ENCODE measurements at regions of chr2 and their contacts with region 1.

Region 1: GRCh38 chr2:29130295-29130694 is 15.1 kb downstream of the CLIP4 start:
- DNase-seq: no peak
- H3K4me3 ChIP-seq: peak overlapping the region; percentile 43
- H3K27ac ChIP-seq: peak overlapping the region; percentile 97
- H3K27me3 ChIP-seq: no peaks in the 10 kb centered on the region
- CTCF ChIP-seq: no peak

Region 2: DNA sequence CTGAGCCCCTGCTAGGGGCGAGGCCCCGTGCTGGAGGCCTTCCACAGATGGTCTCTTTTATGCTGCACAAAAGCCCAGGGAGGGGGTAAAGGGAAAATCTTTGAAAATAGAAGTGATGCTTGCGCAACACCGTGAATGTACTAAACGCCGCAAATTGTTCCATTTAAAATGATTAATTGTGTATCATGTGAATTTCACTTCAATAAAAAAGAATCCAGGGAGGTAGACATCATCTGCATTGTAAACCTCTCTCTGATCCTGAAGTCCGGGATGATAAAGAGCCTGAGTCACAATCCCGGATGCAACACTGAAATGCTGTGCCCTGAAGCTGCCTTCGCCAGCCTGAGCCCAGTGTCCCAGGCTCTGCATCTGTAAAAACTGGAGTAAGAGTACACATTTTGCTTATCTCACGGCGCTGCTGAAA is 486.4 kb before region 1 on chr2:
- CTCF ChIA-PET with region 1: no interaction called
- POLR2A ChIA-PET with region 1: no interaction called
- DNase-seq: no peak
- H3K4me3 ChIP-seq: no peak overlapping the region
- H3K27ac ChIP-seq: peak overlapping the region; percentile 52
- H3K27me3 ChIP-seq: no peaks in the 10 kb centered on the region
- CTCF ChIP-seq: no peak

Region 3: GRCh38 chr2:29108225-29108624 is 22.1 kb before region 1 on chr2:
- CTCF ChIA-PET with region 1: no interaction called
- POLR2A ChIA-PET with region 1: interaction called, 11 read pairs
- DNase-seq: peak; percentile 88
- H3K4me3 ChIP-seq: no peak overlapping the region; the same call in 1 of the 2 replicates
- H3K27ac ChIP-seq: peak overlapping the region; percentile 69
- H3K27me3 ChIP-seq: no peaks in the 10 kb centered on the region
- CTCF ChIP-seq: no peak

Region 4: GRCh38 chr2:29115797-29116781 is 14.2 kb before region 1 on chr2:
- CTCF ChIA-PET with region 1: interaction called, 12 read pairs
- POLR2A ChIA-PET with region 1: interaction called, 17 read pairs
- DNase-seq: peak; percentile 72
- H3K4me3 ChIP-seq: peak overlapping the region; percentile 83
- H3K27ac ChIP-seq: peak overlapping the region; percentile 96
- H3K27me3 ChIP-seq: no peaks in the 10 kb centered on the region
- CTCF ChIP-seq: no peak